IMR-90 (cell line): ENCODE measurements at regions of chr21 and their contacts with region 1.

Region 1: DNA sequence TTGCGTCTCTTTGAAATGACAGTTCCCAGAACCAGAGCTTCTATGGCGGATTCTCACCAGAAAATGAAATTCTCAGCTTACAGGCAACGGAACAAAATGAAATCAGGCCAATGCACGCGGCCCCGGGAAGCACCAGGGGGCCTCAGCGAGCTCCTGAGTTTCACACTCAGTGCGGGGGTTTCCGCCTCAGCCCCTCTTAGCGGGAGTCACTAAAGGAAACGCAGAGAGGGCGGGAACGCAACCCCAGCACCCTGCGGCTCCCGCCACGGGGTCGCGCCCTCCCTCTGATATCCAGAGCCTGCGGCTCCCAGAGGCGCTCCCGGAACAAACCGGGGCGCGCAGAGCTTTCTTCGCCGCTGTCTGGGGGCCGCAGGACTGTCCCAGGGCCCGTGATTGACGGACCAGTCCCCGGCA is 7.9 kb upstream of the COL6A1 start:
- DNase-seq: peak; percentile 87
- ATAC-seq: peak; percentile 33
- H3K4me3 ChIP-seq: peak overlapping the region; percentile 14
- H3K27ac ChIP-seq: peak overlapping the region; percentile 91
- H3K4me1 ChIP-seq: peaks cover 50% of the 10 kb centered on the region
- H3K27me3 ChIP-seq: no peaks in the 10 kb centered on the region
- CTCF ChIP-seq: peak; percentile 82
- POLR2A ChIP-seq: 0 out of 2 replicates have a peak, but pooled peaks have one; percentile 24
- RAD21 ChIP-seq: peak; percentile 76

Region 2: GRCh38 chr21:45992301-45993209 is 18.9 kb after region 1 on chr21:
- CTCF ChIA-PET with region 1: no interaction called
- POLR2A ChIA-PET with region 1: no interaction called
- dilution Hi-C with region 1: no loop called
- in situ Hi-C with region 1: no loop called
- intact Hi-C with region 1: no loop called
- DNase-seq: no peak
- ATAC-seq: no peak
- H3K4me3 ChIP-seq: no peak overlapping the region
- H3K27ac ChIP-seq: peak overlapping the region; percentile 66; the same call in 1 of the 2 replicates
- H3K4me1 ChIP-seq: 0 out of 2 replicates have a peak, but pooled peaks cover 1% of the 10 kb centered on the region
- H3K27me3 ChIP-seq: no peaks in the 10 kb centered on the region
- CTCF ChIP-seq: no peak
- POLR2A ChIP-seq: no peak
- RAD21 ChIP-seq: no peak

Region 3: DNA sequence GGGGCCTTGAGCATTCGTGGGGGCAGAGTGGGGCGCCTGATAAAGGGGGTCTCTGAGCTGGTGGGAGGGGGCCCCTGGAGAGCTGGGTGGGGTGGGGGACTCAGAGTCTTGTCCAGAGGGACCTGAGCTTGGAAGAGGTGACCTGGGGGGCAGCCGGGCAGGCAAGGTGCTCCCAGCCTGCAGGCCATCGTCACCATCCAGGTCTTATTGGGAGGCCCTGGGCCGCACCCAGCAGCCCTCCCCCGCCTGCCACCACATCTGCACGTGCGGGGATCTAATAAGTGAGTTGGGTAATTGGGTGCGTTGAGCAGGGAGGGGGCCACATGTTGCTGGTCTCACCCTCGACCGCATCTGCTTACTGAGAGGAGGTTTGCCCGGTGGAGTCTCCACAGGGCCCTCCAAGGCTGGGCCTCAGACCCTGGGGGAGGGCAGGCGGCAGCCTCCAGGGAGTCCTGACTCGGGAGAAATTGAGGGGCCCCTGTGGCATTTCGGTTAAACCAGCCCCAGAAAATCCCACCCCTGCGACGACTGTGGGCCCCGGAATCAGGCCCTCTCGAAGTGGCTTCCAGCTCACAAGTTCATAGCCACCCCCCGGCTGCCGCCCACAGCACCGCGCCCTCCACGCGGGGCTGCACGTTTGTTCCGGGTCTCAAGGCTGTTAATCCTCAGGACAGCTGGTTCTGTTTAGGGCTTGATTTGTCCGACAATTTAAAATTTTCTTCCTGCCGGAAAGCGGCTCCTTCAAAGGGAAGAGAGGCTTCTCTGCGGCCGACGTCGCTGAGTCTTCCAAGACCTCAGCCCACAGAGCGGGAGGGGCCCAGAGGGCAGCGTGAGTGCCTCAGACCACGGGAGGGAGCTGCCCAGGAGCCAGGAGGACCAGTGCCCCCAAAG is 109.5 kb after region 1 on chr21:
- CTCF ChIA-PET with region 1: no interaction called
- POLR2A ChIA-PET with region 1: interaction called, 12 read pairs
- dilution Hi-C with region 1: no loop called
- in situ Hi-C with region 1: no loop called
- intact Hi-C with region 1: no loop called
- DNase-seq: no peak
- ATAC-seq: no peak
- H3K4me3 ChIP-seq: no peak overlapping the region
- H3K27ac ChIP-seq: no peak overlapping the region
- H3K4me1 ChIP-seq: peaks cover 24% of the 10 kb centered on the region
- H3K27me3 ChIP-seq: no peaks in the 10 kb centered on the region
- CTCF ChIP-seq: no peak
- POLR2A ChIP-seq: no peak
- RAD21 ChIP-seq: no peak

Region 4: GRCh38 chr21:46092026-46092764 is 118.5 kb after region 1 on chr21:
- CTCF ChIA-PET with region 1: no interaction called
- POLR2A ChIA-PET with region 1: interaction called, 6 read pairs
- dilution Hi-C with region 1: no loop called
- in situ Hi-C with region 1: loop called (anchors 5 kb)
- intact Hi-C with region 1: no loop called
- DNase-seq: peak; percentile 99
- ATAC-seq: peak; percentile 86
- H3K4me3 ChIP-seq: peak overlapping the region; percentile 28
- H3K27ac ChIP-seq: peak overlapping the region; percentile 92
- H3K4me1 ChIP-seq: peaks cover 24% of the 10 kb centered on the region
- H3K27me3 ChIP-seq: no peaks in the 10 kb centered on the region
- CTCF ChIP-seq: 0 out of 2 replicates have a peak, but pooled peaks have one; percentile 0
- POLR2A ChIP-seq: peak; percentile 76
- RAD21 ChIP-seq: peak; percentile 22; the same call in 1 of the 2 replicates

Region 5: DNA sequence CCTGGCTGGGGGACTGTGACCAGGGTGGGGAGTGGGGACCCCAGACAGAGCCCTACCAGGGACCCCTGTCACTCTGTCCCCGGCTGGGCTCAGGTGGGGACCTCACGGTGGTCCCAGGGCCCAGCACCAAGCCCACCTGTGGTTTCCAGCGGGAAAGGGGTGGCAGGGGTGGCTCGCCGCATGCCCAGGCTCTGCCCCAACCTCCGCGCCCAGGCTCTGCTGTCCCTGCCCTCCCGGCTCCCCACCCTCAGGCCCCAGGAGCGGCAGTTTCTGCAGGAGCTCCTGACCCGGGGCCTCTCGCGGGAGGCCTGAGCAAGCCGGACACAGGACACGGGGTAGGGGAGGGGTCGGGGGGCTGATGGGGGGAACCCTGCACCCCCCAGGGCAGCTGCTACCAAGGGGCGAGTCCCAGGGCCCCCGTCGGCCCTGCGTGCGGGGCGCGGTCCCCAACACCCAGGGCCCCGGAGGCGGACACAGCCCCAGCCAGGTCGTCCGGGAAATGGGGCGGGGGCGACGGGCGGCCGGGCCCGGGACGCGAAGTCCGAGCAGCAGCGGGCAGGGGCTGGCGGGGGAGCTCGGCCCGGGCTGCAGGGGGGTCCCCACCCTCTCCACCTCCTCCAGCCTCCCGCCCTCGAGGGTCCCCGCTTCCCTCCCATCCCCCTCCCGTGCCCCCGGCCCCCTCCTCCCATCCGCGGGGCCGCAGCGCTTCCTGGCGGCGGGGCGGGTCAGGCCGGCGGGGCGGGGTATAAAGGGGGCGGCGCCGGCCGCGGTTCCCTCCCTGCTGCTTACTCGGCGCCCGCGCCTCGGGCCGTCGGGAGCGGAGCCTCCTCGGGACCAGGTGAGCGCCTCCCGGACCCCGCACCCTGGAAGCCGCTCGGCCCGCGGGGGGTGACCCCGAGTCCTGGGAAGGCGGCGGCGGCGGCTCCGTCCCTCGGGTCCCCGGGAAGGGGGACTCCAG is 123.9 kb after region 1 on chr21 and contains the start of gene COL6A2:
- CTCF ChIA-PET with region 1: interaction called, 3 read pairs
- POLR2A ChIA-PET with region 1: interaction called, 6 read pairs
- dilution Hi-C with region 1: no loop called
- in situ Hi-C with region 1: loop called (anchors 5 kb)
- intact Hi-C with region 1: loop called (anchors 2 kb)
- DNase-seq: peak; percentile 71
- ATAC-seq: peak; percentile 88
- H3K4me3 ChIP-seq: peak within 1 kb of the TSS; percentile 97
- H3K27ac ChIP-seq: peak within 1 kb of the TSS; percentile 98
- H3K4me1 ChIP-seq: peaks cover 23% of the 10 kb centered on the region
- H3K27me3 ChIP-seq: no peaks in the 10 kb centered on the region
- CTCF ChIP-seq: peak; percentile 42
- POLR2A ChIP-seq: peak; percentile 94
- RAD21 ChIP-seq: peak; percentile 45
- total RNA-seq, gene COL6A2: 208 and 222 TPM in 2 replicates

Region 6: GRCh38 chr21:46228345-46229051 is 254.8 kb after region 1 on chr21 and contains the start of gene LSS:
- CTCF ChIA-PET with region 1: no interaction called
- POLR2A ChIA-PET with region 1: no interaction called
- dilution Hi-C with region 1: no loop called
- in situ Hi-C with region 1: no loop called
- intact Hi-C with region 1: loop called (anchors 2 kb)
- DNase-seq: peak; percentile 97
- ATAC-seq: peak; percentile 96
- H3K4me3 ChIP-seq: peak within 1 kb of the TSS; percentile 98
- H3K27ac ChIP-seq: peak within 1 kb of the TSS; percentile 80
- H3K4me1 ChIP-seq: peaks cover 13% of the 10 kb centered on the region
- H3K27me3 ChIP-seq: no peaks in the 10 kb centered on the region
- CTCF ChIP-seq: no peak
- POLR2A ChIP-seq: peak; percentile 68
- RAD21 ChIP-seq: no peak
- total RNA-seq, gene LSS: 35.3 and 43.4 TPM in 2 replicates

Region 7: DNA sequence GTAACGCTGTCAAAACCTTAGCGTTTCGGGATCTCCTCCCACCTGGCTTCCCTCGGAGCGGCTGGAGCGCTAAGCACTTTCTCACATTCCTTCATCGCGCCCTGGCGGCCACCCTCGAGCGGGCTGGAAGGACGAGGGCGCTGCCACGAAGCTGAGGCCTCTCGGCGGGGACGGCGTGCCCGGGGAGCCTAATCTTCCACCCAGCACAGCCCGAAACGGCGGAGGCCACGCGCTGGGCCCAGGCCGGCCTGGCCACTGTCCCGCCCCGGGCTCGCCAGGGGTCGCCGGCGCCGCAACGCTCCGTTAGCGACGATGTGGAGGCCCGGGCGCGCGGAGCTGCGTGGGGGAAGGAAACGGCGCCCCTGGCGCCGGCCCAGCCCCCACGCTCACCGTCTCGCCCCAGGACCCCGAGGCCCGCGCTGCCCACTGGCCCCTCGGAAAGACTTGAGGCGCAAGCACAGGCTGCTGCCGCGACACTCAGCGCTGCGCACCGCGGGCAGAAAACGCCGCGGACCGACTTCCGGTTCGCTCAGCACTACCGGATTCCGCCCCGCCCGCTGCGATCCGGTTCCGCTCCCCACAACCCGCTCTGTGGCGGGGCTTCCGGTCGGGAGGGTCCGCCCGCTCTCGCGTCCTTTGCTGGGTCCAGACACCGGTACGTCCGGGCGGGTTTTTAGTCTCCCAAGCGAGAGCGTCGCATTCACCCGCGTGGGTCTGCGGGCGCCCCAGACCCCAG is 312.3 kb after region 1 on chr21 and contains the start of gene YBEY:
- CTCF ChIA-PET with region 1: no interaction called
- POLR2A ChIA-PET with region 1: no interaction called
- dilution Hi-C with region 1: no loop called
- in situ Hi-C with region 1: no loop called
- intact Hi-C with region 1: loop called (anchors 5 kb)
- DNase-seq: peak; percentile 91
- ATAC-seq: peak; percentile 89
- H3K4me3 ChIP-seq: peak within 1 kb of the TSS; percentile 69
- H3K27ac ChIP-seq: peak within 1 kb of the TSS; percentile 95
- H3K4me1 ChIP-seq: peaks cover 12% of the 10 kb centered on the region
- H3K27me3 ChIP-seq: no peaks in the 10 kb centered on the region
- CTCF ChIP-seq: peak; percentile 36
- POLR2A ChIP-seq: peak; percentile 71
- RAD21 ChIP-seq: peak; percentile 42; the same call in 1 of the 2 replicates
- total RNA-seq, gene YBEY: 5.9 and 7.8 TPM in 2 replicates

Region 8: GRCh38 chr21:46323227-46324128 is 349.8 kb after region 1 on chr21 and contains the start of gene C21orf58:
- CTCF ChIA-PET with region 1: no interaction called
- POLR2A ChIA-PET with region 1: no interaction called
- dilution Hi-C with region 1: no loop called
- in situ Hi-C with region 1: no loop called
- intact Hi-C with region 1: loop called (anchors 10 kb)
- DNase-seq: peak; percentile 97
- ATAC-seq: peak; percentile 85
- H3K4me3 ChIP-seq: peak within 1 kb of the TSS; percentile 85
- H3K27ac ChIP-seq: peak within 1 kb of the TSS; percentile 76
- H3K4me1 ChIP-seq: peaks cover 11% of the 10 kb centered on the region
- H3K27me3 ChIP-seq: no peaks in the 10 kb centered on the region
- CTCF ChIP-seq: no peak
- POLR2A ChIP-seq: no peak
- RAD21 ChIP-seq: no peak
- total RNA-seq, gene C21orf58: 2.5 and 2.7 TPM in 2 replicates